Transverse colon (tissue), 4 donors: ENCODE measurements at regions of chr7 and their contacts with region 1.

Region 1: DNA sequence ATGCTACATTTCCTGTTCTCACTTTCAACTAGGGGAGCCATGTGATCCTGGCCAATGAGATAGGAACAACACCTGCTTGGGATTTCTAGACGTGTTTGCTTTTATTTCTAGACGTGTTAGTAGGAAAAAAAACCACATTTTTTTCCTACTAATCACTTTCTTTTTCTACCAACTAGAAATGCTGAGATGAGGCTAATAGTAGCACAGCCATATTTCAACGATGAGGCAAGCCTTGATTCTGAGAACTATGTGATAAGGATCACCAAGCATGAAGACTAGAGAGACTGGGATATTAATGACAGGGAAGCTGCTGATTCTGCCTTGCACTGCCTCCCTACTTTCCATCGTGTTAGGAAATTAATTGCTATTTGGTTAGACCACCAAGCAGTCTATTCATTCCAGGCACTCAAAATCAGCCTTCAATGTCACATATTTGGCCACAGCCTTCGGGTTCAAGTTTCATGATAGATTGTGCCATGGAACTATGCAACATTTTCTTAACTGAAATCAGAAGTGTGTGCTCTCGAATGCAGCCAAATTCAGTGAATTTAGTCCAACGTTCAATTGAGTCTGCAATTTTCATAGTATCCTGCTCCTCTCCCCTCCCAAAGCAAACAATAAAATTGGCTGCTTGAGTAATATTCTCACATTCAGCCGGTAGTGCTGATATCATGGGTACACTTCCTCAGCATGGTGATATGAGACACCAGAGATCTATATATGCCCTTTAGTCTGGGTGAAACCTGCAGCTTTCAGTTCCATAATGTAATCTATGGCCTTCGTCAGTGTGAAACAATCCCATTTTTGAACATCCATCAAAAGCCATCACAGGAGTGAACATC is 98.1 kb downstream of the GPR37 start:
- DNase-seq: no peak
- H3K4me3 ChIP-seq: no peak overlapping the region
- H3K27ac ChIP-seq: no peak overlapping the region
- H3K4me1 ChIP-seq: no peaks in the 10 kb centered on the region
- H3K27me3 ChIP-seq: no peaks in the 10 kb centered on the region
- CTCF ChIP-seq: no peak
- EP300 ChIP-seq: no peak
- POLR2A ChIP-seq: no peak

Region 2: GRCh38 chr7:125084196-125084595 is 416.7 kb after region 1 on chr7:
- in situ Hi-C with region 1: no loop called
- intact Hi-C with region 1: loop called (anchors 10 kb)
- DNase-seq: no peak
- H3K4me3 ChIP-seq: no peak overlapping the region
- H3K27ac ChIP-seq: no peak overlapping the region
- H3K4me1 ChIP-seq: no peaks in the 10 kb centered on the region
- H3K27me3 ChIP-seq: no peaks in the 10 kb centered on the region
- CTCF ChIP-seq: no peak
- EP300 ChIP-seq: no peak
- POLR2A ChIP-seq: no peak